Activated CD4-positive, alpha-beta memory T cell treated with anti-CD3 and anti-CD28 coated beads for 36 hours (primary cell): ENCODE measurements at regions of chr2 and their contacts with region 1.

Region 1: GRCh38 chr2:7567646-7568045 is 650.4 kb downstream of the RNF144A start:
- DNase-seq: peak; percentile 78
- H3K4me3 Mint-ChIP-seq: peak overlapping the region; percentile 23
- H3K27ac Mint-ChIP-seq: peak overlapping the region; percentile 84
- H3K4me1 Mint-ChIP-seq: peaks cover 64% of the 10 kb centered on the region
- H3K27me3 Mint-ChIP-seq: no peaks in the 10 kb centered on the region

Region 2: GRCh38 chr2:7057865-7058400 is 509.7 kb before region 1 on chr2:
- CTCF ChIA-PET with region 1: no interaction called
- POLR2A ChIA-PET with region 1: no interaction called
- intact Hi-C with region 1: no loop called
- DNase-seq: no peak
- H3K4me3 Mint-ChIP-seq: no peak overlapping the region
- H3K27ac Mint-ChIP-seq: peak overlapping the region; percentile 46
- H3K4me1 Mint-ChIP-seq: peaks cover 15% of the 10 kb centered on the region
- H3K27me3 Mint-ChIP-seq: no peaks in the 10 kb centered on the region

Region 3: DNA sequence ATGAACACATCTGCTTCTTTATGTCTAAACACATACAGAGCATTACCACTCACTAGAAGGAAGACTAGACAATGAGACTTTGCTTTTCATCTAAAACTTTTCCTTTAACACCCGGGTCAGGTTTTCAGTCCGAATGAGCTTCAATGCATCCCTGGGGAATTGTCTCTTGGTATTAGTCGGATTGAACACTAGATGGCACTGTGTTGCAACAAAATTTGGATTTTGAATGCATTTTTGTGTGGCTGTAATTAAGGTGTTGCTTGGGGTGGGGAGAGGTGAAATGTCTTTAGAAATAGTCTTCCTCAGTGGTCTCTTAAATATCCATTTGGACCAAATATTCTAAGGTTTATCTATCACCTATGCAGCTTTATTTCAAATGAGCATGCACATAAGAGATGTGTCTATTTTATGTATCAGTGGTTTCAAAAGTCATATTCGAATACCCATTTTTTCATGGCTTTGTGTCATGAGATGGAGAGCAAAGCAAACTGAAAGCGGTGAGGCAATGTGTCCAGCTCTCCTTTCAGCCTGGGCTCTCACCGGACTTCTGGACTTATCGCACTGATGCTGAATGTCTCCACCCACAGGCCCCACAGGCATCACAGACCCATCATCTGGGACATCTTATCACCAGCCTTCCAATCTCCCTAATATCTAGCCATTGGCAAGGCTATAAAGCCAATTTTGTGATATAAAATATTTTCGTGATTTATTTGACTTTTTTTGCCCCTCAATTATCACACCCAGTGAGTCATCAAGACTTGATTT is 140.2 kb before region 1 on chr2:
- CTCF ChIA-PET with region 1: interaction called, 10 read pairs
- POLR2A ChIA-PET with region 1: interaction called, 3 read pairs
- intact Hi-C with region 1: no loop called
- DNase-seq: no peak
- H3K4me3 Mint-ChIP-seq: peak overlapping the region; percentile 35
- H3K27ac Mint-ChIP-seq: peak overlapping the region; percentile 68
- H3K4me1 Mint-ChIP-seq: peaks cover 38% of the 10 kb centered on the region
- H3K27me3 Mint-ChIP-seq: peaks cover 14% of the 10 kb centered on the region

Region 4: GRCh38 chr2:7523481-7524120 is 44.0 kb before region 1 on chr2:
- CTCF ChIA-PET with region 1: no interaction called
- POLR2A ChIA-PET with region 1: interaction called, 5 read pairs
- intact Hi-C with region 1: loop called (anchors 1 kb)
- DNase-seq: no peak
- H3K4me3 Mint-ChIP-seq: peak overlapping the region; percentile 58
- H3K27ac Mint-ChIP-seq: peak overlapping the region; percentile 91
- H3K4me1 Mint-ChIP-seq: peaks cover 50% of the 10 kb centered on the region
- H3K27me3 Mint-ChIP-seq: no peaks in the 10 kb centered on the region

Region 5: DNA sequence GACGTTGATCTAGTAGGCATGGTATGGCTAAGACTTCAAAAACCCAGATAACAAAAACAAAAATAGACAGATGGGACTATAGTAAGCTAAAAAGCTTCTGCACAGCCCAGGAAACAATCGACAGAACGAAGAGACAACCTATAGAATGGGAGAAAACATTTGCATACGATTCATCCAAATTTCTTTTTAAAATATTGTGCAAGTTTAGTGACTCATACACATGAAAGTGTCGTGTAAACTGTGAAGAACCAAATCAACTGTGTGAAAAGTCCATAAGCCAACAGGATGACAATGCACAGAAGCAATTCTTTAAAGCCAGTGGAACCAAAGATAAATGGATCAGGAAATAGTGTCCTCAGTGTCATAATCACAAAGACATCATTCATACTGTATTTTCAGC is 20.6 kb after region 1 on chr2:
- CTCF ChIA-PET with region 1: interaction called, 4 read pairs
- POLR2A ChIA-PET with region 1: interaction called, 4 read pairs
- intact Hi-C with region 1: loop called (anchors 1 kb)
- DNase-seq: no peak
- H3K4me3 Mint-ChIP-seq: no peak overlapping the region
- H3K27ac Mint-ChIP-seq: peak overlapping the region; percentile 71
- H3K4me1 Mint-ChIP-seq: peaks cover 31% of the 10 kb centered on the region
- H3K27me3 Mint-ChIP-seq: peaks cover 3% of the 10 kb centered on the region

Region 6: GRCh38 chr2:7725171-7725849 is 157.7 kb after region 1 on chr2:
- CTCF ChIA-PET with region 1: no interaction called
- POLR2A ChIA-PET with region 1: interaction called, 3 read pairs
- intact Hi-C with region 1: loop called (anchors 5 kb)
- DNase-seq: peak; percentile 46
- H3K4me3 Mint-ChIP-seq: peak overlapping the region; percentile 68
- H3K27ac Mint-ChIP-seq: peak overlapping the region; percentile 80
- H3K4me1 Mint-ChIP-seq: peaks cover 36% of the 10 kb centered on the region
- H3K27me3 Mint-ChIP-seq: no peaks in the 10 kb centered on the region